ENCODE measurements at regions of chr19 and their contacts with region 1.

Region 1: DNA sequence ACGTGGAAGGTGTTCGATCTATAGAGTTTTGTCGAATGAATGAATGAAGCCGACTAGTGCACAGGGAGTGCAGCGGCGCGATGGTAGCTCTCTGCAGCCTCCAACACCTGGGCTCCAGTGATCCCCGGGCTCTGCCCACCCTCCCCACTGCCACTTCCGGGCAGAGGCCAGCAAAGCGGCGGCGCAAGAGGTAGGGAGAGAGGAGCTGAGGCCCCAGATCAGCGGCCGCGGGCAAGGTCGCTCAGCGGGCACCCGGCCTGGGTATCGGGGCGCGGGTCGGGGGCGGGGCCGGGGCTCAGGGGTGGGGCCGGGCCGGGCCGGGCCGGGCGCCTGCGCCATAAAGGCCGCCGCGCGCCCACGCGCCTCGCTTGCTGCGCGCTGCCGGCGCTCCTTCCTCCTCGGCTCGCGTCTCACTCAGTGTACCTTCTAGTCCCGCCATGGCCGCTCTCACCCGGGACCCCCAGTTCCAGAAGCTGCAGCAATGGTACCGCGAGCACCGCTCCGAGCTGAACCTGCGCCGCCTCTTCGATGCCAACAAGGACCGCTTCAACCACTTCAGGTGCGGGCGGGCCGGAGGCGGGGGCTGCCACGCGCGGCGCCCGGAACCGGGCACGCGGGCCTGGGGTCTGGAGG is at the start of gene GPI:
- DNase-seq: peak; percentile 68
- ATAC-seq: peak; percentile 95
- H3K4me3 Mint-ChIP-seq: peak within 1 kb of the TSS; percentile 95
- H3K27ac Mint-ChIP-seq: peak within 1 kb of the TSS; percentile 73
- H3K4me1 Mint-ChIP-seq: peaks cover 25% of the 10 kb centered on the region
- H3K27me3 Mint-ChIP-seq: no peaks in the 10 kb centered on the region
- CTCF ChIP-seq: no peak
- total RNA-seq, gene GPI: 144 and 151 TPM in 2 replicates

Region 2: GRCh38 chr19:33373701-33374421 is 991.1 kb before region 1 on chr19 and contains the start of gene CEBPG:
- CTCF ChIA-PET with region 1: no interaction called
- POLR2A ChIA-PET with region 1: no interaction called
- intact Hi-C with region 1: loop called (anchors 10 kb)
- DNase-seq: no peak
- ATAC-seq: peak; percentile 34
- H3K4me3 Mint-ChIP-seq: peak within 1 kb of the TSS; percentile 86
- H3K27ac Mint-ChIP-seq: peak within 1 kb of the TSS; percentile 93
- H3K4me1 Mint-ChIP-seq: peaks cover 52% of the 10 kb centered on the region
- H3K27me3 Mint-ChIP-seq: no peaks in the 10 kb centered on the region
- CTCF ChIP-seq: no peak
- total RNA-seq, gene CEBPG: 30.6 and 32.0 TPM in 2 replicates

Measured in activated B cell treated with CpG ODN at 0.5 μM for 24 hours (primary cell).